Heart right ventricle (tissue), 16 donors: ENCODE measurements at regions of chr1 and their contacts with region 1.

Region 1: GRCh38 chr1:226029093-226029496 is 30.0 kb upstream of the SDE2 start:
- DNase-seq: no peak
- ATAC-seq: peak in 1 of 8 donors; percentile 35
- H3K4me3 ChIP-seq: no peak overlapping the region
- H3K27ac ChIP-seq: peak overlapping the region in 1 of 10 donors; percentile 69
- H3K4me1 ChIP-seq: peaks cover 0 to 44% (median 0%) of the 10 kb centered on the region in 9 donors
- H3K27me3 ChIP-seq: no peaks in the 10 kb centered on the region
- CTCF ChIP-seq: no peak

Region 2: DNA sequence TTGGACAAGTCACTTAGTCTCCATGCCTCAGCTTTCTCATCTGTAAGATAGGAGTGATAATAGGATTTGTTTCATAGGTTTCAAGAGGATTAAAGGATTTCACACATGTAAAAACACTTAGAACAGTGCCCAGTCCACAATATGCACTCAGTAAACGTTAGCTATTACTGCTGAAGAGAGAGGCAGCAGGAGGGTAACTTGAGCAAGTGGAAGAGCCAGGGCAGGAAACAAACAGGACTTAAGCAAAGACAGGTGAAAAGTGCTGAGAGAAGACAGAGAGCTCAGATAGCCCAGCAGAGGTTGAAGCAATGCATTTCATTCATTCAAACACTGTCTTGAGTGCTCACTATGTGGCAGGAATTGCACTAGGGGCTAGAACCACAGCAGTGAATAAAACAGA is 12.3 kb after region 1 on chr1:
- intact Hi-C with region 1: loop called in 1 of 10 experiments (anchors 1 kb)
- DNase-seq: no peak
- ATAC-seq: no peak
- H3K4me3 ChIP-seq: no peak overlapping the region
- H3K27ac ChIP-seq: peak overlapping the region in 1 of 10 donors; percentile 85
- H3K4me1 ChIP-seq: peaks cover 0 to 20% (median 0%) of the 10 kb centered on the region in 9 donors
- H3K27me3 ChIP-seq: no peaks in the 10 kb centered on the region
- CTCF ChIP-seq: no peak